ENCODE measurements at regions of chr17 and their contacts with region 1.

Region 1: GRCh38 chr17:80892019-80892855 is 99.4 kb upstream of the CHMP6 start:
- DNase-seq: peak; percentile 84
- H3K4me3 Mint-ChIP-seq: peak overlapping the region; percentile 74
- H3K27ac Mint-ChIP-seq: peak overlapping the region; percentile 89
- H3K4me1 Mint-ChIP-seq: peaks cover 66% of the 10 kb centered on the region
- H3K27me3 Mint-ChIP-seq: no peaks in the 10 kb centered on the region

Region 2: DNA sequence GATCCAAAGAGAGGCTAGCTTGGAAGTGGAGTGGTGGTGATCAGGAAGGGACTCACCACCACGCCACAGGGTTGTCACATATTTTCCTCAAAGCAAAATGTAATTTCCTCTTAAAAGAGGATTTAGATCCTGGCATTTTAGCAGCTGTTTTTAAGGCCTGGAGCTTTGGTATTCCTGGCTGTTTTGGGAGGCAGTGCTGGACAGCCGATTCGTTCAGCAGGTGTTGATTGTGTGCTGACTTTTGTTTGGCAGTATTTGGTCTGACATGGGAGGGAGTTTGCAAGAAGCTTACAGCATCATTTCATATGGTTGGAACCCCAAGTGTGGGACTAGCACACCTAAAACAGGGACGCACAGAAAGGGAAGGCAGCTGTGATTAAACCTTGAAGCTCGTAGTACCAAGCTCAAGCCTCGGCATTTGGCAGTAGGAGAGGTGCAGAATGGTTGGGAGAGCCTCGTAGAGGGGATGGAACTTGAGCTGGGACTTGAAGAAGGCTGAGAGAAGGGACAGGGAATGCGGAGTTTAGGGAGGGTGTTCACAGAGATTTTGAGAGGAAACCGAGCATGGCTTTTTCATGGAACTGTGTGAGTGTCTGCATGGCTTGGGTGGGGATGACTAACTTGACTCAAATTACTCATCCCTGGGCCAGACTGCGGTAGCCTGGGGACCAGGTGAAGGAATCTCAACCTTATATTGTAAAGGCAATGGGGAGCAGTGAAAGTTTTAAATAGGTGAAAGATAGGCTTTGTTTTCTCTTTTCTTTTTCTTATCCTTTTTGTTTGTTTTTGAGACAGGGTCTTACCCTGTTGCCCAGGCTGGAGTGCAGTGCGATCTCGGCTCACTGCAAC is 295.3 kb before region 1 on chr17:
- intact Hi-C with region 1: loop called (anchors 5 kb)
- DNase-seq: no peak
- H3K4me3 Mint-ChIP-seq: no peak overlapping the region
- H3K27ac Mint-ChIP-seq: peak overlapping the region; percentile 2
- H3K4me1 Mint-ChIP-seq: peaks cover 50% of the 10 kb centered on the region
- H3K27me3 Mint-ChIP-seq: no peaks in the 10 kb centered on the region

Region 3: DNA sequence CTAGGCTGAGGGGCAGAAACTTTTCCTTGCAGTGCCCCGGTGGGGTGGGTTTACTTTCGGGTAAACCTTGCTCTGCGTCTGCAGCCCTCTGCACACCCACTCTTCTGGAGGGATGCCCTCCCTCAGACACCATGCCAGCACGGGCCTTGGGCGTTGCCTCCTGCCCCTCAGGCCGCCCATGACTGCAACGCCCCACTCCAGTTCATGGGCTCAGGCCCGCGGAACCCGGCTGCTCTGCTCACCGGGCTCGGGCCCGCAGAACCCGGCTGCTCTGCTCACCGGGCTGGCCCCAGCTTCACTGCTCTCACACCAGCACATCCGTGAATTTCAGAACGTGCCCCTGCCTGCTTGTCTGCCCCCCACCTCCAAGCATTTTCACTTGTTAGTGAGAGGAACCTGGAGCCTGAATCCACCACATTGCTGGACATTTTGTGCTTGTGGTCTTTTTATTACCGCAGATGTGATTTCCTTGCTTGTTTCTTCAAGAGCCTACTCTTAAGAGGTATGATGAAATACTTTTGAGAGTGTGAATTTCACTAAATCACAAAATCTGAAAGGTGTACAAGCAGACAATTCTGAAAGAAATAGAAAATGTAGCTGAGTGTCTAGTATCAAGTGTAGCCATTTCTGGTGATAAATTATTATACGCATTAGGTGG is 216.7 kb before region 1 on chr17:
- intact Hi-C with region 1: loop called (anchors 5 kb)
- DNase-seq: no peak
- H3K4me3 Mint-ChIP-seq: no peak overlapping the region
- H3K27ac Mint-ChIP-seq: peak overlapping the region; percentile 4
- H3K4me1 Mint-ChIP-seq: peaks cover 64% of the 10 kb centered on the region
- H3K27me3 Mint-ChIP-seq: no peaks in the 10 kb centered on the region

Region 4: GRCh38 chr17:80791758-80792284 is 100.4 kb before region 1 on chr17:
- intact Hi-C with region 1: loop called (anchors 2 kb)
- DNase-seq: peak; percentile 40
- H3K4me3 Mint-ChIP-seq: peak overlapping the region; percentile 73
- H3K27ac Mint-ChIP-seq: peak overlapping the region; percentile 92
- H3K4me1 Mint-ChIP-seq: peaks cover 72% of the 10 kb centered on the region
- H3K27me3 Mint-ChIP-seq: no peaks in the 10 kb centered on the region

Region 5: DNA sequence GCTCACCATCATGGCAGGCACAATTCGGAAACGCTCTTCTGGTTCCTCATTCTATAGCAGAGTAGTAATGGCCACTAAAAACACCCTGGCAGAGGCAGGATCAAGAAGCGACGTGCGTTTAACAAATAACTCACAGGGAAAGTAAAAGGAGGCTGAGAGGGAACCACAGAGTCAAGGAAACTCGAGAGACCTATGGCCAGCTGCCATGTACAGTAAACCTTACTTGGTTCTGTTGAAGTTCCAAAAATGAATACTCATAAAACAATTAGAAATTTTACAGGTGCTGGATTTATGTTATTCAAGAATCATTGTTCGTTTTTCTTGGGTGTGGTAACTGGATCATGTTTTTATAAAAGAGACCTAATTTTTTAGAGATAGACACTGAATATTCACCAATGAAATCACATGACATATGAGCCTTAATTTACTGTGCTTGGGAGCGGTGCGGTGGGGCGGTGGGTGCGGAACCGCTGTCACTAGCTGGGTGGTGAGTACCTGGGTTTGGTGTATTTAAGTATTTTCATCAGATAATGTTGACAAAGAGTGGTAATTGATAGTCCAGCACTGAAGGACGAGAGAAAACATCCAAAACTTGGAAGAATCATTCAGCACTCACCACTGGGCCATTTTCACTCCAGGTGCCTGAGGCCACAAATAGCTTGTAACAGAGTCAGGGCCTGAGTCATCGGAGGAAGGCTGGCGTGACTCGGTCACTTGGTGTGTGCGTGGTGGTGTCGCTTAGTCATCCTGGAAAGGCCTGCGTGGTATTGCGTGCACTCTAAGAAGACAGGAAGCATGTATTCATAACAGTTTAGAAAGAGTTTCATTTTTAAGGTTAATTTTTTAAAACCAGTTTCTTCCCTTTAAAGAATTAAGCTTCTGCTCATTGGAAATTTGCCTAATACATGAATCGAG is 36.0 kb before region 1 on chr17:
- intact Hi-C with region 1: loop called (anchors 2 kb)
- DNase-seq: peak; percentile 88
- H3K4me3 Mint-ChIP-seq: peak overlapping the region; percentile 37
- H3K27ac Mint-ChIP-seq: peak overlapping the region; percentile 97
- H3K4me1 Mint-ChIP-seq: peaks cover 69% of the 10 kb centered on the region
- H3K27me3 Mint-ChIP-seq: no peaks in the 10 kb centered on the region

Region 6: DNA sequence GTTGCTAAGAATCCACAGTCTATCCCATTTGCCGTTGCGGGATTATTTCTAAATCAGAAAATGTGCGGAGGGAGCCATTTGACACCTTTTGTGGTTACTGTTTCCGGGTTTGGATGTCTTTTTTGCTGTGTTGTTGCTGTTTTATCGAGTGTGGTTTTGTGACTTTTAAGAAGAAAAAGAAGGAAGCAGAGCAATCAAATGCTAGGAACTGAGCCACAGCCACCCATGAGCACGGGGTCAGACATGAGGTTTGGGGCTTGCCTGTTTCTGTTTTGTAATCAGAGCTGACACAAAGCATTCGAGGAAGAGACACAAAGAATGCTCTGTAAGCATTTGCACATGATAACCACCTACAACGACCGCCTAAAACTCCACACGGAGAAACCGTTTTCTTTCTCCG is 46.3 kb after region 1 on chr17:
- intact Hi-C with region 1: loop called (anchors 5 kb)
- DNase-seq: peak; percentile 69
- H3K4me3 Mint-ChIP-seq: peak overlapping the region; percentile 38
- H3K27ac Mint-ChIP-seq: peak overlapping the region; percentile 79
- H3K4me1 Mint-ChIP-seq: peaks cover 42% of the 10 kb centered on the region
- H3K27me3 Mint-ChIP-seq: no peaks in the 10 kb centered on the region

Region 7: DNA sequence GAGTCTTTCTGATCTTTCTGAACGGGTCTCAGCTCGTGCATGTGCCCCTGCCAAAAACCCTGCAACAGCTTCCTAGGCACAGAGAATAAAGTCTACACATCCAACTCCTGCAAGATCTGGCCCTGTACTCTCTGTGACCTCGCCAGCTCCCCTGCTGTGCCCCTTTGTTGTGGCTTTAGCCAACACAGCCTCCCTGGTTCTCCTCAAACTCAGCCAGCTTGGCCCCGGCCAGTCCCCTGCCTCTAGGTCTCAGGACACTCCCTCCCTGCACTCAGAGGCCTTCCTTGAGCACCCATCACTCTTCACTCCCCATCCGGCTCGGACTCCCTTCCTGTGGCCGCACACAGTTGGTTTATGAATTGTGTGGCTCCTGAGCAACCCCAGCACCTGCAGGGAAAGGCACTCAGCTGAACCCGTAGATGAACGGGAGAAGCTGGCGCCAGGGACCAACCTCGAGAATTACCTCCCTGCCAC is 329.2 kb after region 1 on chr17:
- intact Hi-C with region 1: no loop called
- DNase-seq: no peak
- H3K4me3 Mint-ChIP-seq: peak overlapping the region; percentile 71
- H3K27ac Mint-ChIP-seq: no peak overlapping the region
- H3K4me1 Mint-ChIP-seq: peaks cover 11% of the 10 kb centered on the region
- H3K27me3 Mint-ChIP-seq: no peaks in the 10 kb centered on the region

Measured in activated T-helper 2 cell treated with anti-CD3 and anti-CD28 coated beads, Interferon-gamma antibody, Interleukin-2, Interleukin-4, amounts not matched to agents 10 μg/mL and 5 μg/mL and 100 μg/mL, durations not matched to agents 14 hours and 24 hours and 36 hours (primary cell).